ENCODE measurements at regions of chr13 and their contacts with region 1.

Region 1: GRCh38 chr13:102724923-102725322 is 30.1 kb upstream of the METTL21C start:
- DNase-seq: peak; percentile 82
- ATAC-seq: peak; percentile 97
- H3K4me3 ChIP-seq: no peak overlapping the region
- H3K27ac ChIP-seq: no peak overlapping the region
- H3K4me1 ChIP-seq: peaks cover 9% of the 10 kb centered on the region; the same call in 1 of the 2 replicates
- H3K27me3 ChIP-seq: no peaks in the 10 kb centered on the region
- CTCF ChIP-seq: peak; percentile 81
- EP300 ChIP-seq: peak in 1 of 2 experiments; percentile 20; a peak in 1 of 4 replicates
- POLR2A ChIP-seq: no peak
- RAD21 ChIP-seq: 0 out of 2 replicates have a peak, but pooled peaks have one; percentile 32

Region 2: DNA sequence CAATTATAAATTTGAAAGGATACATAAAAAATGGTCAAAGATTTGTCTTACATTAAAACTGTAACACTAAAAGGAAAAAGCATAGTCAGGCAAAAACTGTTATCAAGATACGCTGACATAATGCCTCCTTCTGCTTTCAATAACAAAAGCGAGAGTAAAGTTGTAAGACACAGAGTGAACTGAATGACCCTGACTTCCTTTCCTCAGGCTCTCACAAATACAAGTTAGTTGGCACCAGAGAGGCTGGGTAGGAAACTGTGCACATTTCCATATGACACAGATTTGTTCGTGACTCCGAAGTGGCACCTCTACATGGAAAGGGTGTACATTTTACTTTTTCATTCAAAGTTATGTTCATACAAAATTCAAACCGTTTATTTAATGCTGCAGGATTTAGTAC is 338.5 kb before region 1 on chr13:
- CTCF ChIA-PET with region 1: no interaction called
- POLR2A ChIA-PET with region 1: no interaction called
- in situ Hi-C with region 1: no loop called
- intact Hi-C with region 1: no loop called
- DNase-seq: no peak
- ATAC-seq: no peak
- H3K4me3 ChIP-seq: no peak overlapping the region
- H3K27ac ChIP-seq: no peak overlapping the region
- H3K4me1 ChIP-seq: no peaks in the 10 kb centered on the region
- H3K27me3 ChIP-seq: no peaks in the 10 kb centered on the region; a peak in 1 of 5 replicates
- CTCF ChIP-seq: no peak
- EP300 ChIP-seq: no peak
- POLR2A ChIP-seq: no peak
- RAD21 ChIP-seq: no peak

Region 3: DNA sequence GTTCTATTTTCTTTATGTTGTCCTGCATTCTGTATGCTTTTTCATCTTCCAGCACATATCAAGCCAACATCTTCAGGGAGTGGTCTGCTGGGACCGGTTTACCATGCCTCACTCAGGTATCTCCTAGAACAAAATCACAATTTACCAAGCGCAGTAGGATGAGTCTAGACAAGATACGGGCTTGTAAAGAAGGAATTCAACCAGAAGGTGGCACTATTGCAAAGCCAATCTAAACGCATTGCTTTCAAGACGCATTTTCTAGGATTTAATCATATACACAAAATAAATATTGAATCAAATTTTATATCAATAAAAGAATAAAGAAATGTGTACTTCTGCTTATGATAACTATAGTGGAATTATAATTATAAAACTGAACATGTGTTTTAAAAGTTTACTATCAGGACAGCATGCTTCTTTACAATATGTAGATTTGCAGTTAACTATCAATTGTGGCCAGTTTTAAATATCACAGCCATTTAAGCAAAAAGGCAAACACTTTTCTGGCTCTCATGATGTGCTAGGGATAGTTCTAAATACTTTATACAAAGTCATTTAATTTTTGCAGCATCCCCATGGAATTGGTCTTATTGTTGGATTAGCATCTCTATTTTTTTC is 144.3 kb before region 1 on chr13:
- CTCF ChIA-PET with region 1: interaction called, 12 read pairs
- POLR2A ChIA-PET with region 1: no interaction called
- in situ Hi-C with region 1: loop called (anchors 5 kb)
- intact Hi-C with region 1: loop called (anchors 1 kb)
- DNase-seq: peak; percentile 55
- ATAC-seq: peak; percentile 87
- H3K4me3 ChIP-seq: no peak overlapping the region
- H3K27ac ChIP-seq: no peak overlapping the region
- H3K4me1 ChIP-seq: no peaks in the 10 kb centered on the region
- H3K27me3 ChIP-seq: peaks cover 0 to 14% of the 10 kb centered on the region in 2 experiments; a peak in 4 of 5 replicates
- CTCF ChIP-seq: peak; percentile 78
- EP300 ChIP-seq: no peak
- POLR2A ChIP-seq: no peak
- RAD21 ChIP-seq: peak; percentile 55

Region 4: DNA sequence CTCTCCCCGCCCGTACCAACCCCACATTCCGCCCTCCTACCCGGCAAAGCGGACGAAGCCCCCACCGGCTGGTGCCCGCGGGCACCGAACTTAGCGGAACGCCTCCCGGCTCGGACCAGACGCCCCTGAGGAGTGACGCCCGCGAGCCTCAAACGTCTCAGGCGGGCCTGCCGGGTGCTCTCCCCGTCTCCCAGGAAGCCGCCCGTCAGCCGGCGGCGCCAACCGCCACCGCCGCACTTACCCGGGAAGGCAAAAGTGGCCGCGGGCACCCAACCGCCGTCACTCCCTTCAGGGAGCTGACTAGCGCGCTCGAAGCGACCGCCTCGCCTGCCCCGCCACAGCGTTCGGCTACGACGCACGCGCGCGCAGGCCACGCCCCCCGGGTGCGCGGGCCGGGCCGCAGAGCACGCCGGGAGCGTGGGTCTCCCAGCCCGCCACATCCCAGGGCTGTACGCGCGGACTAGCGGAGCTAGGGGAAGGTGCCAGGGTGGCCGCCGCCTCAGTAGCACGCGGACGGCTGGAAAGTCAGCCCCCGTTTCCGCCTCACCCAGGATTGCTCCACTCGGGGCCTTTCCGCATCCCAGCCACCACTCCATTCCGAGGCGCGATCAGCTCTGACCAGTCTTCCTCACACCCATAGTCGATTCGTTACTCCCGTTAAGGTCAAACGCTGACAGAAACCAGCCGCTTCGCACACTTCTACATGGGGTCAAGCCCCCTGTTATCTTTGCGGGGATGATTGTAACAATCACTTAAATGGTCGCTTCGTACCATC is 48.7 kb after region 1 on chr13 and contains the start of gene TEX30:
- CTCF ChIA-PET with region 1: no interaction called
- POLR2A ChIA-PET with region 1: no interaction called
- in situ Hi-C with region 1: no loop called
- intact Hi-C with region 1: loop called (anchors 5 kb)
- DNase-seq: no peak
- ATAC-seq: no peak
- H3K4me3 ChIP-seq: peak within 1 kb of the TSS; percentile 45 to 65 (median 48); a peak in 5 of 6 replicates
- H3K27ac ChIP-seq: no peak within 1 kb of the TSS
- H3K4me1 ChIP-seq: peaks cover 32% of the 10 kb centered on the region
- H3K27me3 ChIP-seq: no peaks in the 10 kb centered on the region; a peak in 1 of 5 replicates
- CTCF ChIP-seq: no peak
- EP300 ChIP-seq: no peak
- POLR2A ChIP-seq: no peak
- RAD21 ChIP-seq: no peak
- total RNA-seq, gene TEX30: 0.60 and 1.2 TPM in 2 replicates